Activated naive CD4-positive, alpha-beta T cell treated with anti-CD3 and anti-CD28 coated beads for 36 hours (primary cell): ENCODE measurements at regions of chr5 and their contacts with region 1.

Region 1: DNA sequence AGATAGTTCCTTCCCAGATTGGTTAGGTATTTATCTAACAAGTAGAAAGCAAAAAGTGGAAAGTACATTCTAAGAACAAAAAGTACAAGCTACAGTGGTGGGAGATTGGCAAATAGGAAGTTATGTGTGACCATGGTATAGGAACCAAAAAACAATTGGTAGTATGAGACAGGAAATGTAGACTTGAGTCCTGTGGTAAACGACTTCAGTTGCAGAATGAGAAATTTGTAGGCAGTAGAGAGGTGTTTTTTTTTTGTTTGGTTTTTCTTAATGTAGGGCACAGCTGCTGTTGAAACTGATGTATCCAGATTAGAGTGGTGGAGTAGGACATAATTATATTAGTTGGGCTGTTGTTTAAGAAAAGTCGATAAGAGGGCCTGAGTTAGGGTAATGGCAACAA is 72.0 kb downstream of the CCNH start:
- DNase-seq: no peak
- H3K4me3 Mint-ChIP-seq: peak overlapping the region; percentile 33
- H3K27ac Mint-ChIP-seq: peak overlapping the region; percentile 77
- H3K4me1 Mint-ChIP-seq: peaks cover 20% of the 10 kb centered on the region
- H3K27me3 Mint-ChIP-seq: no peaks in the 10 kb centered on the region

Region 2: GRCh38 chr5:87061046-87061445 is 279.7 kb before region 1 on chr5:
- CTCF ChIA-PET with region 1: no interaction called
- intact Hi-C with region 1: no loop called
- DNase-seq: no peak
- H3K4me3 Mint-ChIP-seq: no peak overlapping the region
- H3K27ac Mint-ChIP-seq: no peak overlapping the region
- H3K4me1 Mint-ChIP-seq: no peaks in the 10 kb centered on the region
- H3K27me3 Mint-ChIP-seq: no peaks in the 10 kb centered on the region

Region 3: DNA sequence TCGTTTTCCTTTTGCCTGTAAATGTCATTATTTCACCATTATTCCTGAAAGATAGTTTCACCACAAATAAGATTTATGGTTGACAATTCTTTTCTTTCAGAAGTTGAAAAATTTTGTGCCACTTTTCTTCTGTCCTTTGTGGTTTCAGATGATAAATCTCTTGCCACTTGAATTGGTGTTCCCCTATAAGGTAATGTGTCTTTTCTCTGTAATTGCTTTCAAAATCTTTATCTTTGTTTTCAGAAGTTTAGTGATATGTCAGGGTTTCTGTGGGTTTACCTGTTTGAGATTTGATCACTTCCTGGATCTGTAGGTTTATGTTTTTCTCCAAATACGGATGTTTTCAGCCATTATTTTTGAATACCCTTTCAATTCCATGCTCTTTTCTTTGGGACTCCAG is 58.4 kb before region 1 on chr5:
- CTCF ChIA-PET with region 1: no interaction called
- intact Hi-C with region 1: loop called (anchors 1 kb)
- DNase-seq: no peak
- H3K4me3 Mint-ChIP-seq: peak overlapping the region; percentile 57
- H3K27ac Mint-ChIP-seq: peak overlapping the region; percentile 77
- H3K4me1 Mint-ChIP-seq: peaks cover 43% of the 10 kb centered on the region
- H3K27me3 Mint-ChIP-seq: no peaks in the 10 kb centered on the region

Region 4: GRCh38 chr5:87717761-87718160 is 377.0 kb after region 1 on chr5:
- CTCF ChIA-PET with region 1: no interaction called
- intact Hi-C with region 1: no loop called
- DNase-seq: no peak
- H3K4me3 Mint-ChIP-seq: no peak overlapping the region
- H3K27ac Mint-ChIP-seq: no peak overlapping the region
- H3K4me1 Mint-ChIP-seq: no peaks in the 10 kb centered on the region
- H3K27me3 Mint-ChIP-seq: peaks cover 3% of the 10 kb centered on the region